Heart right ventricle (tissue), 16 donors: ENCODE measurements at regions of chr22 and their contacts with region 1.

Region 1: DNA sequence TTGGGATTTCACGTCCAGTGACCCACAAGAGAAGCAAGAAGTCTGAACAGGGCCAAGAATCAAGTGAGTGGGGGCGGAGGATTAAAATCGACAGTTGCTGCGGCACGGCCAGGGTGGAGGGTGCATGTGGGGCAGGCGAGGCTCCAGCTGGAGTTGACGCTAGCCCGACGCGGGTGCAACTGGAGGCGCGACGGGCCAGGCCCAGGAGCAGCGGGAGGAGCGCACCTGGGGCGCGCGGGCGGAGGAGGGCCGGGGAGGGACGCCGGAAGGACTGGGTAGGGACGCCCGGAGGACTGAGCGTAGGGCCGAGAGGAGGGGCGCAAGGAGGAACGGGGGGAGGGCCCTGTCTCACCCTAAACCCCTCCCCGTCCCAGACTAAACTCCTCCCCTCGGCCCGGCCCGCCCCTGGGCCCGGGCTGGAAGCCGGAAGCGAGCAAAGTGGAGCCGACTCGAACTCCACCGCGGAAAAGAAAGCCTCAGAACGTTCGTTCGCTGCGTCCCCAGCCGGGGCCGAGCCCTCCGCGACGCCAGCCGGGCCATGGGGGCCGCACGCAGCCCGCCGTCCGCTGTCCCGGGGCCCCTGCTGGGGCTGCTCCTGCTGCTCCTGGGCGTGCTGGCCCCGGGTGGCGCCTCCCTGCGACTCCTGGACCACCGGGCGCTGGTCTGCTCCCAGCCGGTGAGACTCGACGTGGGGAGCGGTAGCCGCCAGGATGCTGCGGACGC is at the start of gene IL17RA:
- DNase-seq: peak; percentile 92 to 93
- ATAC-seq: peak; percentile 98 to 99 (median 99)
- H3K4me3 ChIP-seq: peak within 1 kb of the TSS; percentile 72 to 98 (median 96)
- H3K27ac ChIP-seq: peak within 1 kb of the TSS; percentile 49 to 99 (median 90)
- H3K4me1 ChIP-seq: peaks cover 0 to 48% (median 17%) of the 10 kb centered on the region in 9 donors
- H3K27me3 ChIP-seq: no peaks in the 10 kb centered on the region
- CTCF ChIP-seq: peak in 1 of 9 donors; percentile 4
- total RNA-seq, gene IL17RA: 4.0 to 15.9 (median 5.9) TPM

Region 2: DNA sequence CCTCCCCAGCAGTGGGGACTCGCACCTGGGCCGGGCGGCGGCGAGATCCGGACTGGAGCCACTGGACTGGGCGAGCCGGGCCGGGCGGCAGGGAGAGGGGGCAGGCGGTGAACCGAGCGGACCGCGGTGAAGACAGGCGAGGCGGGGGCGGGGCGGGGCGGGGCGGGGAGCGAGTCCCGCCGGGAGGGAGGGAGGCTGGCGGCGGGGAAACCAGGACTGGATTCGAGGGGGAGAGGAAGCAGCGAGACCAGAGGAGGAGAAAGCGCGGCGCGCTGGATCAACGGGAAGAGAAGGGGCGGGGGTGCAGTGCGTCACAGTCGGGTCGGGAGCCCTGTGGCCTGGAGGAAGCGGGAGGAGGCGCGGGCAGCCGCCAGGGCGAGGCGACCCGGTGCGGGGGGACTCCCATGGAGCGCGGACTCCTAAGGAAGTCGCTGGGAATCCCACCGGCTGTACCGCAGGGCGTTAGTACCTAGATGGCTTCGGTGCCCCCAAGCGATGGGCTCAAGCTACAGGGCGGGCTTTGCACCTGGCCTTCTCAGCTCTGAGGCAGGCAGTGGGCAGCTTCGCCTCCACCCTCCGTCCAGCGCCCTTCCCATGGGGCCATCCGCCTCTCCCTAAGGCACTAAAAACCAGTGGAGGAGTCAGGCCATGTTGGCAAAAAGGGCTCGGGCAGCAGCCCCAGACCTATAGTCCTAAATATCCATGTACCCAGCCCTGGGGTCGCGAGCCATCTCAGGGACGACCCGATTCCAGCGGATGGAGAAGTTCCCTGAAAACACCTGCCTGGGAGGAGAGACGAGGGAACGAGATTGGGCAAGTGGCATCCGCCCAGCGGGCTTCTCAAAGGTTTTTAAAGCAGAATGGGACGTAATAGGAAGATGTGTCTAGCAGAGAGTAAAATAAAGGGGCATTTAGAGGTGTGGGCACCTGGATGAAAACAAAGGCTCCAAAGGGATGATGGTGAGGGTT is 36.8 kb after region 1 on chr22 and contains the start of gene TMEM121B:
- intact Hi-C with region 1: loop called in 1 of 10 experiments (anchors 5 kb)
- DNase-seq: peak; percentile 79 to 85
- ATAC-seq: peak; percentile 77 to 93 (median 86)
- H3K4me3 ChIP-seq: peak within 1 kb of the TSS; percentile 58 to 80 (median 68)
- H3K27ac ChIP-seq: peak within 1 kb of the TSS in 8 of 10 donors; percentile 39 to 82 (median 68)
- H3K4me1 ChIP-seq: peaks cover 3 to 42% (median 23%) of the 10 kb centered on the region in 9 donors
- H3K27me3 ChIP-seq: peaks cover 0 to 31% (median 0%) of the 10 kb centered on the region in 7 donors
- CTCF ChIP-seq: no peak
- total RNA-seq, gene TMEM121B: 1.2 to 3.3 (median 1.9) TPM

Region 3: DNA sequence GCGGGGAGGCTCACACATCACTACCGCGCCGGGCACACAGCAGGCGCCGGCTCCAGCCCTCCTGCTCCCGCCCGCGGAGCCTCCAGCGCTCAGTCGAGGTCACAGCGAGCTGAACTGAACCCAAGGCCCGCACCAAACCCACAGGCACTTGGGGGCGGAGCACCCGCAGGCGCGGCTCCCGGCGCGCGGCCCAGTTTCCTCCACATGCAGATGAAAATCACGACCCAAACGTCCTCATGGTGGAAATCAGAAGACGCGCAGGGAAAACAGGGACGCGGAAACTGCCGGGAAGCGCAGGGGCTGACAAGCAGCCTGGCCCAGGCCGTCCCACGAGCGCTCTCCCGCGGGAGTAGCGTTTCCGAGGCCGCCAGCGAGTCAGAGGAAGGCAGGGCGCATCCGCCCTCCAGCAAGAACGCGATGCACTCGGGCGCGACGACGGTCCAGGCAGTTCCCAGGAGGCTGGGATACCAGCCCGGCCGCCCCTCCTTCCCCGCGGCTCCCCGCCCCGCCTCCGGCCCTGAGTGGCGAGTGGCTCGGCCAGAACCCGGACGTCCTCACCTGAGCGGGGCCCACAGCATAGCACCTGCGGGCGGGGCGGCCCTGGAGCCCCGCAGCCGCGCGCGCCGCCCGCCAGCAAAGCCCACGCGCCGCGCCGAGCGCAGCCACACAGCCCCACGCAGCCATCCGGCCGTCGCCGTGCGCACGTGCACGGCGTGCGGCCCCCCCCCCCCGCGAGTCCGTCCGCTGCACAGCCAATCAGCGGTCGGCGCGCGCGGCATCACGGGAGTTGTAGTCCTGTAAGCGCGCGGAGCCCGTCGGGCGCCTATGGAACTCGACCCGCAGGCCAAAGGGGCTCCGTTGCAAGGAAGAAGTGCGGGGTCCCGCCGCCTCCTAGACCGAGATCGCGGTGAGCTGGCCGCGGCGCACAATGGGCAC is 74.1 kb after region 1 on chr22 and contains the start of gene HDHD5:
- intact Hi-C with region 1: loop called in 4 of 10 experiments (anchors 2 to 10 kb)
- DNase-seq: peak; percentile 91 to 92
- ATAC-seq: peak; percentile 90 to 96 (median 93)
- H3K4me3 ChIP-seq: peak within 1 kb of the TSS; percentile 58 to 87 (median 74)
- H3K27ac ChIP-seq: peak within 1 kb of the TSS; percentile 86 to 97 (median 92)
- H3K4me1 ChIP-seq: peaks cover 6 to 51% (median 30%) of the 10 kb centered on the region in 9 donors
- H3K27me3 ChIP-seq: no peaks in the 10 kb centered on the region
- CTCF ChIP-seq: peak in 2 of 9 donors; percentile 7 to 17
- total RNA-seq, gene HDHD5: 42.8 to 59.2 (median 50.3) TPM

Region 4: DNA sequence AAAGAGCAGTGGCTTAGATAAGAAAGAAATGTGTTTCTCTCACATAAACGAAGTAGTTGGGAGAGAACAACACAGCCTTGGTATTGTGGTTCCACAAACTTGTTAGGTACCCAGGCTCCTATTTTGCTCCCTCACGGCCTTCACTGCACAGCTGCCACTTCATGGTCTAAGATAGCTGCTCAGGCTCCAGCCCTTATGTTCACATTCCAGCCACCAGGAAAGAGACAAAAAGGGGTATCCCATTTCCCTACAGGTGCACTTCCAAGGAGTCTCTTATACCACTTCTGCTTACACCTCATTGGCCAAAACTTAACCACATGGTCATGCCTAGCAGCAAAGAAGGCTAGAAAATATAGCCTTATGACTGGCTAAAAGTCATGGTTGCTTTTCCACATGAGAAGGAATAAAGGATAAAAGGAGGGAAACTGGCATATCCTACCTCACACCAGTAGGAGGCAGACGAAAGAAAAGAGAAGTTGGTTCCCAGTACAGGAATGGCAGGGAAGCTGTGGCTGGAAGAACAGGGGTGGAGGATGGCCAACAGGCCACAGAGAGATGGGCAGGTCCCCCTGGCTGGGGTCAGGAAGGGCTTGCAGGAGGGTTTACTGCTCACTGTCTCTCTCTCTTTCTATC is 79.8 kb after region 1 on chr22:
- intact Hi-C with region 1: loop called in 7 of 10 experiments (anchors 2 to 10 kb)
- DNase-seq: no peak
- ATAC-seq: no peak
- H3K4me3 ChIP-seq: no peak overlapping the region
- H3K27ac ChIP-seq: no peak overlapping the region
- H3K4me1 ChIP-seq: peaks cover 4 to 27% (median 11%) of the 10 kb centered on the region in 9 donors
- H3K27me3 ChIP-seq: no peaks in the 10 kb centered on the region
- CTCF ChIP-seq: peak in 1 of 9 donors; percentile 15

Region 5: DNA sequence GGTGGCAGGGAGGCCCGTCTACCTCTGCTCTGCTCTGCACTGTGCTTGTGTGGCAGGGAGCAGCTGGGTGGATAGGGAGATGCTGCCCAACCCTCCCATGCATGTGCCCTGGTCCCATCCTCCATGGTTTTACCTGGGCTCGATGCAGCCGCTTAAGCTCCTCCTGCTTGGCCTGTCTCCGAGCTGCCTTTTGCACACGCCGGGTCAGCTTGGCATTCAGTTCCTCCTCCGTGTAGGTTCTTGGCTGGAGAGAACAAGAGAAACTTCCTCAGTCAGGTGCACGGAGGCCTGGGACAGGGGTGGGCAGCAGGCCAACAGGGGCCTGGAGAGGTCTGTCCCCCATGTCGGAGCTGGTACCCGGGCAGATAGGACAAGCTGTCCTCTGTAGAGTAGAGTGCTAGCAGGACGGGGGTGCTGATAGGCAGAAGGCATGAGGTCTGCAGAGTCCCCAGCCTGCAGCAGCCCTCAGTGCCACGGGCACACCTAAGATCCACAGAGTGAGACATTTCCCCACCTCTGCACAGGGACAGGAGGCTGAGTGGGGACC is 725.9 kb after region 1 on chr22:
- intact Hi-C with region 1: loop called in 1 of 10 experiments (anchors 10 kb)
- DNase-seq: peak in 1 of 2 donors; percentile 36
- ATAC-seq: peak in 6 of 8 donors; percentile 13 to 81 (median 43)
- H3K4me3 ChIP-seq: no peak overlapping the region
- H3K27ac ChIP-seq: peak overlapping the region in 7 of 10 donors; percentile 12 to 53 (median 45)
- H3K4me1 ChIP-seq: peaks cover 0 to 36% (median 19%) of the 10 kb centered on the region in 9 donors
- H3K27me3 ChIP-seq: no peaks in the 10 kb centered on the region
- CTCF ChIP-seq: no peak